Vagina (tissue), 2 donors: ENCODE measurements at regions of chr1 and their contacts with region 1.

Region 1: GRCh38 chr1:108661030-108661620 is at the start of gene HENMT1:
- DNase-seq: no peak
- H3K4me3 ChIP-seq: peak within 1 kb of the TSS; percentile 78 to 79
- H3K27ac ChIP-seq: peak within 1 kb of the TSS; percentile 88
- H3K4me1 ChIP-seq: peaks cover 4% of the 10 kb centered on the region
- H3K27me3 ChIP-seq: no peaks in the 10 kb centered on the region
- CTCF ChIP-seq: no peak
- POLR2A ChIP-seq: no peak
- total RNA-seq, gene HENMT1: 0.98 TPM

Region 2: GRCh38 chr1:108208724-108209429 is 452.2 kb before region 1 on chr1:
- intact Hi-C with region 1: no loop called
- DNase-seq: no peak
- H3K4me3 ChIP-seq: no peak overlapping the region
- H3K27ac ChIP-seq: no peak overlapping the region
- H3K4me1 ChIP-seq: no peaks in the 10 kb centered on the region
- H3K27me3 ChIP-seq: no peaks in the 10 kb centered on the region
- CTCF ChIP-seq: no peak
- POLR2A ChIP-seq: no peak

Region 3: GRCh38 chr1:108559215-108560186 is 101.6 kb before region 1 on chr1 and contains the start of gene EEIG2:
- intact Hi-C with region 1: loop called (anchors 5 kb)
- DNase-seq: no peak
- H3K4me3 ChIP-seq: peak within 1 kb of the TSS; percentile 67 to 69
- H3K27ac ChIP-seq: peak within 1 kb of the TSS; percentile 79
- H3K4me1 ChIP-seq: peaks cover 25% of the 10 kb centered on the region
- H3K27me3 ChIP-seq: no peaks in the 10 kb centered on the region
- CTCF ChIP-seq: peak; percentile 31 to 51 (median 36)
- POLR2A ChIP-seq: peak in 1 of 2 donors; percentile 39
- total RNA-seq, gene EEIG2: 11.5 TPM

Region 4: GRCh38 chr1:108639899-108640560 is 21.1 kb before region 1 on chr1:
- intact Hi-C with region 1: no loop called
- DNase-seq: no peak
- H3K4me3 ChIP-seq: no peak overlapping the region
- H3K27ac ChIP-seq: no peak overlapping the region
- H3K4me1 ChIP-seq: no peaks in the 10 kb centered on the region
- H3K27me3 ChIP-seq: no peaks in the 10 kb centered on the region
- CTCF ChIP-seq: no peak
- POLR2A ChIP-seq: no peak

Region 5: DNA sequence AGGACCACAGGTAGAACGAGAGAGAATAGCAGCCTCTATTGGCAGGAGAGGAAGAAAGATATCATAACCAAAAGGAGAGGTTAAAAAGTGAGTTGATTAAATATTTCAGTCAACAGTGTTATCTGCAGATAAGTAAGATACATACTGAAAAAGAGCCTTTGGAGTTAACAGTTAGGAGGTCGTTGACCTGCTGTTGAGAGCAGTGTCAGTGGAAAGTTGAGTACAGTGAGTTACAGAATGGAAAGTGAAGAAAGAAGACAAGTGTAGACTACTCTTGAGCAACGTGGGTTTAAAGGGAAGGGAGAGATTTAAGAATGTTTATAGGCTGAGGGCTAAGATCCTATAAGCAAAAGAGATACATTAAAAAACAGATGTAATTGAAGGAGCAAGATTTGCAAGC is 928.1 kb after region 1 on chr1:
- intact Hi-C with region 1: no loop called
- DNase-seq: no peak
- H3K4me3 ChIP-seq: no peak overlapping the region
- H3K27ac ChIP-seq: no peak overlapping the region
- H3K4me1 ChIP-seq: no peaks in the 10 kb centered on the region
- H3K27me3 ChIP-seq: no peaks in the 10 kb centered on the region
- CTCF ChIP-seq: no peak
- POLR2A ChIP-seq: no peak